ENCODE measurements at regions of chr20 and their contacts with region 1.

Region 1: DNA sequence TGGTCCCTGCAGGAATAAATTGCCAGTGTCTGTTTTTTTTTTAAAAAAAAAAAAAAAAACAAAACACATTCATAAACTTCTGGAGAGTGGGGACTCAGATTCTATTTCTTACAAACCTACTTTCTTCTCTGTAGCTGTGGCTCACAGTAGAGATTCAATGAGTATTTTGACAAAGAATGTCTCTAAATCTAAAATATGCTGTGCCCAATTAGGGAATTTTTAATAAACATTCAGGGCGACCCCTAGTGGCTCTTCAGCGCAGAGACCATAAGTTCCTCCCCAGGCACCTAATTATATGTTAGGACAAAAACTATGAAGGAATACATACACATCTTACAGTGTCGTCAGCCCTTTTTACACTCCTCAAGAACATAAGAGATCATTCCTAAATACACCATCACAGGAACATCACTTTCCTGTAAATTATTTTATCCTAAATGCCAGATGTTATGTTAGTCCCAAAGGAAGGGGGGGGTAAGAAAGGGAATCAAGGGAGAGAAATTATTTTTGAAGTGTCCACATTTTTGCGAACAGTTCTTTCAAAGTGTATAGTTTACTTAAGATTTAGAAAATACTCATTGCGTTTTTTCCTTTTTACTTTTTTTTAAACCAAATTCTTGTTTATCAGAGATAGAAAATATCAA is 21.8 kb upstream of the NAA20 start:
- DNase-seq: peak; percentile 56
- ATAC-seq: no peak
- H3K4me3 Mint-ChIP-seq: no peak overlapping the region
- H3K27ac Mint-ChIP-seq: no peak overlapping the region
- H3K4me1 Mint-ChIP-seq: no peaks in the 10 kb centered on the region
- H3K27me3 Mint-ChIP-seq: peaks cover 2% of the 10 kb centered on the region

Region 2: GRCh38 chr20:19692685-19693119 is 302.6 kb before region 1 on chr20:
- CTCF ChIA-PET with region 1: interaction called, 3 read pairs
- POLR2A ChIA-PET with region 1: no interaction called
- intact Hi-C with region 1: loop called (anchors 1 to 2 kb)
- DNase-seq: peak; percentile 68
- ATAC-seq: peak; percentile 42
- H3K4me3 Mint-ChIP-seq: no peak overlapping the region
- H3K27ac Mint-ChIP-seq: no peak overlapping the region
- H3K4me1 Mint-ChIP-seq: peaks cover 3% of the 10 kb centered on the region
- H3K27me3 Mint-ChIP-seq: peaks cover 22% of the 10 kb centered on the region

Region 3: GRCh38 chr20:19742974-19743639 is 252.2 kb before region 1 on chr20:
- CTCF ChIA-PET with region 1: no interaction called
- POLR2A ChIA-PET with region 1: no interaction called
- intact Hi-C with region 1: no loop called
- DNase-seq: no peak
- ATAC-seq: no peak
- H3K4me3 Mint-ChIP-seq: no peak overlapping the region
- H3K27ac Mint-ChIP-seq: no peak overlapping the region
- H3K4me1 Mint-ChIP-seq: no peaks in the 10 kb centered on the region
- H3K27me3 Mint-ChIP-seq: peaks cover 26% of the 10 kb centered on the region

Region 4: GRCh38 chr20:19784511-19785172 is 210.7 kb before region 1 on chr20:
- CTCF ChIA-PET with region 1: interaction called, 5 read pairs
- POLR2A ChIA-PET with region 1: no interaction called
- intact Hi-C with region 1: loop called (anchors 1 kb)
- DNase-seq: peak; percentile 64
- ATAC-seq: peak; percentile 63
- H3K4me3 Mint-ChIP-seq: no peak overlapping the region
- H3K27ac Mint-ChIP-seq: no peak overlapping the region
- H3K4me1 Mint-ChIP-seq: peaks cover 2% of the 10 kb centered on the region
- H3K27me3 Mint-ChIP-seq: peaks cover 11% of the 10 kb centered on the region